Natural killer cell (primary cell): ENCODE measurements at regions of chr19 and their contacts with region 1.

Region 1: GRCh38 chr19:13150187-13150930 is at the starts of genes IER2 and STX10:
- DNase-seq: peak; percentile 88 to 97
- ATAC-seq: peak; percentile 50 to 74 (median 53)
- H3K4me3 ChIP-seq: peak within 1 kb of the TSS; percentile 100
- H3K4me3 Mint-ChIP-seq: peak within 1 kb of the TSS; percentile 99
- H3K27ac ChIP-seq: peak within 1 kb of the TSS; percentile 90
- H3K27ac Mint-ChIP-seq: peak within 1 kb of the TSS; percentile 99
- H3K4me1 ChIP-seq: peaks cover 36% of the 10 kb centered on the region
- H3K4me1 Mint-ChIP-seq: peaks cover 52 to 73% of the 10 kb centered on the region in 2 donors
- H3K27me3 ChIP-seq: no peaks in the 10 kb centered on the region
- H3K27me3 Mint-ChIP-seq: peaks cover 0 to 3% of the 10 kb centered on the region in 2 donors
- CTCF ChIP-seq: peak; percentile 41
- total RNA-seq, gene IER2: 668 to 1,112 (median 949) TPM
- total RNA-seq, gene STX10: 39.2 to 46.9 (median 42.0) TPM

Region 2: DNA sequence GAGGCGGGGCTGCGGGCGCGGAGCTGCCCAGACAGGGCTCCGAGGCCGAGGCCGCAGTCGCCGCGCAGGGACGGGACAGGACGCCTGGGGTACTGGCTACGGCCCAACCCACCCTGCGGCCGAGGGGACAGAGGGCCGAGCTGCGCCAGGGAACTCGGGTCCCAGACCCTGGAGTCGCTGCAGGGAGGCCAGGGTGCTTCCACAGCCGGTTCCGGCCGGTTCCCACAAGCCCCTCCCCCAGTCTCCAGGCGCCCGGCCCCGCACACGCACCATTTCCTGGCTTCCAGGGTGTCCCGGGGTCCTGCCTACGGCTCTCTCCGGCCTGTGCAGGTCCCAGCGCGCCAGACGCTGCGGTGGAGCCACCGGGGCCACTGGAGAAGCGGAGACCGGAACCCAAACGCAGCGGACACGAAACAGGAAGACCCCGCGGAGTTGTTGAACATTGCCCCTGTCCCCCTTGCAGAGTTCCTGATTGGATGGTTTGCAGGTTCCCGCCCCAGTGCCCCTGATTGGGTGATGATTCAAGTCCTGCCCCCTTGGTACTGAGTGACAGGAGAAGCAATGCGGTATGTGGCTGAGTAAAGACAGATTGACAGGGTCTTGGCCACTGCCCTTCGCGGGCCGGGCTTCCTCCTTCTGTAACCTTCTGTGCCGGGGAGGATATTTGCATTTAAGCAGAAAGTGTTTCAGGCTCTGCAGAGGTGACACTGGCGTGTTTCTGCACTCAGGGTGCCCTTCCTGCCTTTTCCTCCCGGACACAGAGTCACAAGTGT is 599.1 kb before region 1 on chr19 and contains the start of gene ZNF564:
- intact Hi-C with region 1: loop called (anchors 5 kb)
- DNase-seq: peak; percentile 90 to 96
- ATAC-seq: peak; percentile 95 to 99 (median 96)
- H3K4me3 ChIP-seq: peak within 1 kb of the TSS; percentile 91
- H3K4me3 Mint-ChIP-seq: peak within 1 kb of the TSS; percentile 99
- H3K27ac ChIP-seq: peak within 1 kb of the TSS; percentile 85
- H3K27ac Mint-ChIP-seq: peak within 1 kb of the TSS; percentile 98
- H3K4me1 ChIP-seq: peaks cover 35% of the 10 kb centered on the region
- H3K4me1 Mint-ChIP-seq: peaks cover 49 to 53% of the 10 kb centered on the region in 2 donors
- H3K27me3 ChIP-seq: no peaks in the 10 kb centered on the region
- H3K27me3 Mint-ChIP-seq: peaks cover 0 to 2% of the 10 kb centered on the region in 2 donors
- CTCF ChIP-seq: no peak
- total RNA-seq, gene ZNF564: 22.0 to 27.1 (median 23.3) TPM

Region 3: GRCh38 chr19:13104360-13104847 is 46.0 kb before region 1 on chr19:
- intact Hi-C with region 1: loop called (anchors 5 kb)
- DNase-seq: peak; percentile 69 to 77
- ATAC-seq: peak; percentile 58 to 62 (median 60)
- H3K4me3 ChIP-seq: peak overlapping the region; percentile 49
- H3K4me3 Mint-ChIP-seq: peak overlapping the region; percentile 93
- H3K27ac ChIP-seq: peak overlapping the region; percentile 84
- H3K27ac Mint-ChIP-seq: peak overlapping the region; percentile 70 to 88
- H3K4me1 ChIP-seq: peaks cover 69% of the 10 kb centered on the region
- H3K4me1 Mint-ChIP-seq: peaks cover 10 to 43% of the 10 kb centered on the region in 2 donors
- H3K27me3 ChIP-seq: no peaks in the 10 kb centered on the region
- H3K27me3 Mint-ChIP-seq: no peaks in the 10 kb centered on the region
- CTCF ChIP-seq: peak; percentile 97

Region 4: DNA sequence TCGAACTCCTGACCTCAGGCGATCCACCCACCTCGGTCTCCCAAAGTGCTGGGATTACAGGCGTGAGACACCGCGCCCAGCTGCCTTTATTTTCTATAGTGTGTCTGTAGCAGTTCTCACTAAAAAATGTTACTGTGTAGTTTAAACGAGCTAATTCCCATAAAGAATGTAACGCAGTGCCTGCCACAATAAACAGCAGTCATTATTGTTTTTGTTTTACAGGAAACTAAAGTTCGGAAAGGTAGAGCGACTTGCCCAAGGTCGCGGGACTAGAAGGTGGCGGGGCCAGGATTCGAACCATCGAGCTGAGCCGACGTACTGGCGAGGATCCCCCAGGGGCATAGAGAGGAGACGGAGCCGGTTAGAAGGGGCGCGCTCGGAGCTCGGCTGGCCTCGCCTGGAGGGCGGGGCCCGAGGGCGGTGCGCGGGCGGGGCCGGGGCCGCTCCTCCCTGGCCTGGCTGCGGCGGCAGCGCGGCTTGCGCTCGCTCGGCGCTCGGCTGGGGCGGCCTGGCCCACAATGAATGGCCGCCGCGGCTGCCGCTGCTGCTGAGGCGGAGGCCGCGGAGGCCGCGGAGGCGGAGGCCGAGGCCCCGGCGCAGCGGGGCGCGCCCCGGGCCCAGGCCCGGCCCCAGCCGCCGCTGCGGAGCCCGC is 32.5 kb before region 1 on chr19 and contains the start of gene NACC1:
- intact Hi-C with region 1: loop called (anchors 1 kb)
- DNase-seq: peak; percentile 86 to 92
- ATAC-seq: peak; percentile 77 to 92 (median 81)
- H3K4me3 ChIP-seq: peak within 1 kb of the TSS; percentile 74
- H3K4me3 Mint-ChIP-seq: peak within 1 kb of the TSS; percentile 99
- H3K27ac ChIP-seq: peak within 1 kb of the TSS; percentile 55
- H3K27ac Mint-ChIP-seq: peak within 1 kb of the TSS; percentile 88 to 93
- H3K4me1 ChIP-seq: peaks cover 65% of the 10 kb centered on the region
- H3K4me1 Mint-ChIP-seq: peaks cover 51 to 65% of the 10 kb centered on the region in 2 donors
- H3K27me3 ChIP-seq: no peaks in the 10 kb centered on the region
- H3K27me3 Mint-ChIP-seq: no peaks in the 10 kb centered on the region
- CTCF ChIP-seq: no peak
- total RNA-seq, gene NACC1: 41.2 to 48.7 (median 43.4) TPM

Region 5: GRCh38 chr19:13162518-13163314 is 12.4 kb after region 1 on chr19:
- intact Hi-C with region 1: loop called (anchors 1 kb)
- DNase-seq: peak; percentile 64 to 93
- ATAC-seq: peak; percentile 37 to 68 (median 42)
- H3K4me3 ChIP-seq: peak overlapping the region; percentile 48
- H3K4me3 Mint-ChIP-seq: peak overlapping the region; percentile 87
- H3K27ac ChIP-seq: peak overlapping the region; percentile 93
- H3K27ac Mint-ChIP-seq: peak overlapping the region; percentile 92 to 95
- H3K4me1 ChIP-seq: peaks cover 88% of the 10 kb centered on the region
- H3K4me1 Mint-ChIP-seq: peaks cover 42 to 65% of the 10 kb centered on the region in 2 donors
- H3K27me3 ChIP-seq: no peaks in the 10 kb centered on the region
- H3K27me3 Mint-ChIP-seq: no peaks in the 10 kb centered on the region
- CTCF ChIP-seq: no peak

Region 6: GRCh38 chr19:14369399-14370168 is 1219.2 kb after region 1 on chr19:
- intact Hi-C with region 1: loop called (anchors 10 kb)
- DNase-seq: peak; percentile 83 to 96
- ATAC-seq: peak; percentile 62 to 85 (median 77)
- H3K4me3 ChIP-seq: peak overlapping the region; percentile 41
- H3K4me3 Mint-ChIP-seq: peak overlapping the region; percentile 91
- H3K27ac ChIP-seq: peak overlapping the region; percentile 99
- H3K27ac Mint-ChIP-seq: peak overlapping the region; percentile 90 to 100
- H3K4me1 ChIP-seq: peaks cover 98% of the 10 kb centered on the region
- H3K4me1 Mint-ChIP-seq: peaks cover 58 to 69% of the 10 kb centered on the region in 2 donors
- H3K27me3 ChIP-seq: no peaks in the 10 kb centered on the region
- H3K27me3 Mint-ChIP-seq: no peaks in the 10 kb centered on the region
- CTCF ChIP-seq: no peak